PC-3 (cell line): ENCODE measurements at regions of chr20 and their contacts with region 1.

Region 1: DNA sequence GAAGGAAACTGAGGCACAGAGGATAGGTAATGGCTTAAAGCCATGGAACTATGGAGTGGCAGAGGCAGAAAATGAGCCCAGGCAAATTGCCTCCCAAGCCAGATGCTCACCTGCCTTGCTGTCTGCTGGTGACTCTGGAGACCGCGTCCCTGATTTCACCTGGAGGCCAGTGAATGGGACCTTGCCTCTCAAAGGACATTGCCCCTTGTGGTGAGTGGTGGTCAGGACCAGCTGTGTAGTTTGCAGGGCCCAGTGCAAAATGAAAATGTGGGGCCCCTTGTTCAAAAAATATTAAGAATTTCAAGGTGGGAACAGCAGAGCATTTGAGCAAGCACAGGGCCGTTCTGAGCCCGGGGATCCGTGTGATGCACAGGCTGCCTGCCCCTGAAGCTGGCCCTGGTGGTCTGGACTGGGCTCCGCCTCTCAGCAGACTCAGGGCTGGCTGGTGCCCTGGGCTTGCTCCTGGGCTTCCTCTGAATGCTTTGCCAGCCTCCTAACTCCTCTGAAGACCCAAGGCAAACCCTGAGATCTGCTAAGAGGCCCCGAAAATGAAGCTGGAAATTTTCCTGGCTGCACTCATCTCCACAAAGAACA is 19.8 kb upstream of the KCNG1 start:
- DNase-seq: peak; percentile 35
- ATAC-seq: peak; percentile 49; the same call in 1 of the 2 replicates
- H3K4me3 ChIP-seq: no peak overlapping the region
- H3K27ac ChIP-seq: no peak overlapping the region
- H3K4me1 ChIP-seq: peaks cover 4% of the 10 kb centered on the region; the same call in 1 of the 2 replicates
- H3K27me3 ChIP-seq: no peaks in the 10 kb centered on the region
- CTCF ChIP-seq: peak; percentile 50

Region 2: DNA sequence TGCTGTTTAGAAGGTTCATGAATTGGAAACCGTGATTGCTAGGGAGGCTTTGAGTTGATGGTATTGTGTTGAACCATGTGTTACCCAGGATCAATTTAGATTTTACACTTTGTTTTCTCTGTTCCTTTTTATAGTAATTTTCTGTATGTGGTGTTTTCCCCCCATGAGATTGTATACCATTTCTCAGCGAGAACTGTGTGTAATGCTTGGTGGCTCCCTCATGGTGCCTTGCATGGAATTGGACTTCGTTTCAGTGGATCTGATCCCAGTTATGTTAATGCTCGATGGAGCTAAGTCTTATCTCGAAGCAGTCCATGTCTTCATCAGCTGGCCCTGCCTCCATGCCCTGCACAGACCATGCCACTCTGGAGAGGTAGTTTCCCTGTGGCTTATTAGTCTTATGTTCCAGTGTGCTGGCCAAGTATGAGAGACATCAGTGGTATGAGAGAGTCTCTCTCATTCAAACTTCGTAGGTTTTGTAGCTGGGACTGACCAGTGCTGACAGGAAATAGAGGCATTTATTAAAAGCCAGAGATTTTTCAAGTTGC is 513.9 kb before region 1 on chr20:
- CTCF ChIA-PET with region 1: no interaction called
- POLR2A ChIA-PET with region 1: no interaction called
- intact Hi-C with region 1: no loop called
- DNase-seq: no peak
- ATAC-seq: no peak; the same call in 1 of the 2 replicates
- H3K4me3 ChIP-seq: no peak overlapping the region
- H3K27ac ChIP-seq: no peak overlapping the region
- H3K4me1 ChIP-seq: peaks cover 16% of the 10 kb centered on the region; the same call in 1 of the 2 replicates
- H3K27me3 ChIP-seq: no peaks in the 10 kb centered on the region
- CTCF ChIP-seq: no peak

Region 3: DNA sequence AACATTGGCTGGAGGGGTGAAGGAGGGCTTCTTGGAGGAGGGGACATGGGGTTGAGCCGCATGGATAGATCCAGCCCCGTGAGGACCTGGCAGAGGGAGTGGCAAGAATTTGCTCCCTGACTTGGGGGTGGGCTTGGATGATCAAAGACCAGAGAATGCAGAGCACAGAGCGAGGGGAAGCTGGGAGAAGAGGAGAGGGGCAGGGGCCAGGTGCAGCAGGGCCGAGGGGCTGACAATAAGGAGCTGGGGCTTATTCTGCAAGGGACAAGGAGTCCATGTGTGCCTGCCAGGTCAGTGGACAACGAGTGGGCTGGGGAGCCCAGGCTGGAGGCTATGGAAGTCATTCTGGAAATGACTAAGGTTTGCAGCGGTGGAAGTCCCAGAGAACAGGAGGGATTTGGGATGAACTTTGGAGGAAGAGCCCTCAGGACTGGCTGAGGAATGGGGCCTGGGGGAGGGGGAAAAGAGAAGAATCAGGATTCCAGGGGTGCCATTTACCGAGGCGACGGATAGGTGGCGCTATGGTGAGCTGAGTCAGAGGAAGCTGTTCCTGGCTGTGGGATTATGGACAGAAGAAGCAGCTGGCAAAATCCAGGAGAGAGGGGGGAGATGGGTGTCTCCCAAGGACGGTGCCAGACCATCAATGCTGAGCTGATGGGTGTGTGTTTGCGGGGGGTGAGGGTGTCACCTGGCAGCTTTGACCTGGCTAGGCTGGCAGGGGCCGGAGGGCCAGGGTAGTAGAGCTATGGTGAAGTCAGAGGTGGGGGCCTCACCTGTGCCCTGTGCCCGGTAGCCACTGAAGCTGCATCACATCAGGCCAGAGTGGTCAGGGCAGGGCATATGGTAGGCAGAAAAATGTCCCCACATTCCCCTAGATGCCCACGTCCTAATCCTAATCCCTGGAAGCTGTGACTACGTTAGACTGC is 27.7 kb before region 1 on chr20:
- CTCF ChIA-PET with region 1: interaction called, 13 read pairs
- POLR2A ChIA-PET with region 1: no interaction called
- intact Hi-C with region 1: no loop called
- DNase-seq: peak; percentile 90
- ATAC-seq: peak; percentile 85
- H3K4me3 ChIP-seq: no peak overlapping the region
- H3K27ac ChIP-seq: no peak overlapping the region
- H3K4me1 ChIP-seq: no peaks in the 10 kb centered on the region
- H3K27me3 ChIP-seq: no peaks in the 10 kb centered on the region
- CTCF ChIP-seq: peak; percentile 98

Region 4: GRCh38 chr20:51076786-51077685 is 34.3 kb after region 1 on chr20:
- CTCF ChIA-PET with region 1: no interaction called
- POLR2A ChIA-PET with region 1: no interaction called
- intact Hi-C with region 1: no loop called
- DNase-seq: no peak
- ATAC-seq: no peak
- H3K4me3 ChIP-seq: no peak overlapping the region
- H3K27ac ChIP-seq: no peak overlapping the region
- H3K4me1 ChIP-seq: no peaks in the 10 kb centered on the region
- H3K27me3 ChIP-seq: peaks cover 50% of the 10 kb centered on the region
- CTCF ChIP-seq: no peak; the same call in 1 of the 2 replicates